Caco-2 (cell line): ENCODE measurements at regions of chr18 and their contacts with region 1.

Region 1: GRCh38 chr18:57630002-57630753 is 8.5 kb upstream of the NARS1 start:
- DNase-seq: peak; percentile 88 to 91
- H3K4me3 ChIP-seq: peak overlapping the region; percentile 44
- H3K4me3 Mint-ChIP-seq: peak overlapping the region; percentile 85
- H3K27ac Mint-ChIP-seq: peak overlapping the region; percentile 89
- H3K4me1 ChIP-seq: no peaks in the 10 kb centered on the region
- H3K4me1 Mint-ChIP-seq: peaks cover 7% of the 10 kb centered on the region
- H3K27me3 ChIP-seq: no peaks in the 10 kb centered on the region
- H3K27me3 Mint-ChIP-seq: no peaks in the 10 kb centered on the region
- CTCF ChIP-seq: peak; percentile 27 to 58

Region 2: DNA sequence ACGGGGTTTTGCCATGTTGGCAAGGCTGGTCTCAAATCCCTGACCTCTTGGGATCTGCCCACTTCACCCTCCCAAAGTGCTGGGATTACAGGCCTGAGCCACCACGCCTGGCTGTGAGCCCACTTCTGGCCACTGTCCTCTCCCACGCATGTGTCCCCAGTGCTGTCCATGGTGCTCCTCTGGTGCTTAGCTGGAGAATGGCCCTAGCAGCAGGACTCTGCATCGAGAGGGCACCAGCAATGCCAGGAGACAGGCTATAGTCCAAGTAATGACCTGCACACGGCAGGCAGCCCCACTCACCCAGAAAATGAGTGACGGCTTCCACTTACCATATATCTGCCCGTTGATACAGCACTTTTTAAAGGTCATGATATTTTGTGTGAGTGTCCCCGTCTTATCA is 57.8 kb after region 1 on chr18:
- CTCF ChIA-PET with region 1: no interaction called
- POLR2A ChIA-PET with region 1: no interaction called
- intact Hi-C with region 1: no loop called
- DNase-seq: no peak
- H3K4me3 ChIP-seq: no peak overlapping the region
- H3K4me3 Mint-ChIP-seq: no peak overlapping the region
- H3K27ac Mint-ChIP-seq: no peak overlapping the region
- H3K4me1 ChIP-seq: no peaks in the 10 kb centered on the region
- H3K4me1 Mint-ChIP-seq: no peaks in the 10 kb centered on the region
- H3K27me3 ChIP-seq: no peaks in the 10 kb centered on the region
- H3K27me3 Mint-ChIP-seq: no peaks in the 10 kb centered on the region
- CTCF ChIP-seq: no peak

Region 3: GRCh38 chr18:57859314-57859713 is 229.1 kb after region 1 on chr18:
- CTCF ChIA-PET with region 1: no interaction called
- POLR2A ChIA-PET with region 1: no interaction called
- intact Hi-C with region 1: loop called (anchors 10 kb)
- DNase-seq: peak; percentile 11 to 34
- H3K4me3 ChIP-seq: no peak overlapping the region
- H3K4me3 Mint-ChIP-seq: no peak overlapping the region
- H3K27ac Mint-ChIP-seq: no peak overlapping the region
- H3K4me1 ChIP-seq: peaks cover 5% of the 10 kb centered on the region; the same call in 1 of the 2 replicates
- H3K4me1 Mint-ChIP-seq: no peaks in the 10 kb centered on the region
- H3K27me3 ChIP-seq: no peaks in the 10 kb centered on the region
- H3K27me3 Mint-ChIP-seq: no peaks in the 10 kb centered on the region
- CTCF ChIP-seq: peak in 1 of 2 experiments; percentile 49

Region 4: GRCh38 chr18:59123588-59124369 is 1493.6 kb after region 1 on chr18:
- CTCF ChIA-PET with region 1: no interaction called
- POLR2A ChIA-PET with region 1: no interaction called
- intact Hi-C with region 1: no loop called
- DNase-seq: no peak
- H3K4me3 ChIP-seq: no peak overlapping the region
- H3K4me3 Mint-ChIP-seq: no peak overlapping the region
- H3K27ac Mint-ChIP-seq: no peak overlapping the region
- H3K4me1 ChIP-seq: no peaks in the 10 kb centered on the region
- H3K4me1 Mint-ChIP-seq: no peaks in the 10 kb centered on the region
- H3K27me3 ChIP-seq: no peaks in the 10 kb centered on the region
- H3K27me3 Mint-ChIP-seq: peaks cover 4% of the 10 kb centered on the region
- CTCF ChIP-seq: no peak